ENCODE measurements at regions of chr12 and their contacts with region 1.

Region 1: DNA sequence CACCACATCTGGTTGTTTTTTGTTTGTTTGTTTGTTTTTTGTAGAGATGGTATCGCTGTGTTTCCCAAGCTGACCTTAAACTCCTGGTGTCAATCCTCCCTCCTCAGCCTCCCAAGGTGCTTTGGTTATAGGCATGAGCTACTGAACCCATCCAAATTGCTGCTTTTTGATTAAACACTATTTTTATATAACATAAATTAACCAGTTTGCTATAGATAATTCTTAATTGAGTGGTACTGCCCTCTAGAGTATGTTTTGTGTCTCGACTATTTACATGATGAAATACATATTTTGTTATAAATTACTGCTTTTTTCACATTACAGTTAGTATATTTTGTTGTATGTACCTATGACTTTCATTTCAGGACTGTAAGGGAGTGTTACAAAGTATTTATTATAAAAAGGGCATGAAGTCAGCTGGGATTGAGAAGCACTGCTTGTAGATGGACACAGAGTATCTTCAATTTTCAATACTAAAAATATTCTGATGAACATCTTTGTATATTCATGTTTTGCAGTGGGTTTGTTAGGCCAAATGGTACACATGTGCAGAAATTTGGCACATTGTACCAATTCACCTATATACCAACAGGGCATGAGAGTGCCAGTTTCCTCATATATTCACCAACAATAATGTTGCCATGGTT is 14.9 kb upstream of the SCAF11 start:
- DNase-seq: peak; percentile 8
- H3K4me3 Mint-ChIP-seq: no peak overlapping the region
- H3K27ac Mint-ChIP-seq: no peak overlapping the region
- H3K4me1 Mint-ChIP-seq: no peaks in the 10 kb centered on the region
- H3K27me3 Mint-ChIP-seq: peaks cover 8% of the 10 kb centered on the region
- CTCF ChIP-seq: peak; percentile 31

Region 2: GRCh38 chr12:45170456-45171042 is 834.7 kb before region 1 on chr12:
- CTCF ChIA-PET with region 1: no interaction called
- POLR2A ChIA-PET with region 1: no interaction called
- intact Hi-C with region 1: loop called (anchors 10 kb)
- DNase-seq: peak; percentile 84
- H3K4me3 Mint-ChIP-seq: no peak overlapping the region
- H3K27ac Mint-ChIP-seq: no peak overlapping the region
- H3K4me1 Mint-ChIP-seq: no peaks in the 10 kb centered on the region
- H3K27me3 Mint-ChIP-seq: no peaks in the 10 kb centered on the region
- CTCF ChIP-seq: peak; percentile 85

Region 3: GRCh38 chr12:45872446-45872845 is 132.8 kb before region 1 on chr12:
- CTCF ChIA-PET with region 1: no interaction called
- POLR2A ChIA-PET with region 1: no interaction called
- intact Hi-C with region 1: no loop called
- DNase-seq: no peak
- H3K4me3 Mint-ChIP-seq: no peak overlapping the region
- H3K27ac Mint-ChIP-seq: no peak overlapping the region
- H3K4me1 Mint-ChIP-seq: no peaks in the 10 kb centered on the region
- H3K27me3 Mint-ChIP-seq: no peaks in the 10 kb centered on the region
- CTCF ChIP-seq: no peak

Region 4: GRCh38 chr12:45990468-45991283 is 14.6 kb before region 1 on chr12 and contains the start of gene SCAF11:
- CTCF ChIA-PET with region 1: interaction called, 6 read pairs
- POLR2A ChIA-PET with region 1: interaction called, 15 read pairs
- intact Hi-C with region 1: no loop called
- DNase-seq: peak; percentile 99
- H3K4me3 Mint-ChIP-seq: peak within 1 kb of the TSS; percentile 91
- H3K27ac Mint-ChIP-seq: peak within 1 kb of the TSS; percentile 93
- H3K4me1 Mint-ChIP-seq: peaks cover 31% of the 10 kb centered on the region
- H3K27me3 Mint-ChIP-seq: no peaks in the 10 kb centered on the region
- CTCF ChIP-seq: peak; percentile 85
- total RNA-seq, gene SCAF11: 106 and 107 TPM in 2 replicates

Region 5: DNA sequence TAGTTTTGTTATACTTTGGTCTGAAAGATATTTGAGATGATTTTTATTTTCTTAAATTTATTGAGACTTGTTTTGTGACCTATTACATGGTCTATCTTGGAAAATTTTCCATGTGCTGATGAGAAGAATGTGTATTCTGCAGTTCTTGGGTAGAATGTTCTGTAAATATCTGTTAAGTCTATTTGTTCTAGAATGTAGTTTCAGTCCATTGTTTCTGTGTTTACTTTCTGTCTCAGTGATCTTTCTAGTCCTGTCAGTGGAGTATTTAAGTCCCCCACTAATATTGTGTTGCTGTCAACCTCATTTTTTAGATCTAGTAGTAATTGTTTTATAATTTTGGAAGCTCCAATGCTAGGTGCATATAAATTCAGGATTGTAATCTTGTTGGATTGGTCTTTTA is 15.5 kb after region 1 on chr12:
- CTCF ChIA-PET with region 1: interaction called, 11 read pairs
- POLR2A ChIA-PET with region 1: no interaction called
- intact Hi-C with region 1: no loop called
- DNase-seq: no peak
- H3K4me3 Mint-ChIP-seq: no peak overlapping the region
- H3K27ac Mint-ChIP-seq: no peak overlapping the region
- H3K4me1 Mint-ChIP-seq: no peaks in the 10 kb centered on the region
- H3K27me3 Mint-ChIP-seq: peaks cover 35% of the 10 kb centered on the region
- CTCF ChIP-seq: no peak

Region 6: DNA sequence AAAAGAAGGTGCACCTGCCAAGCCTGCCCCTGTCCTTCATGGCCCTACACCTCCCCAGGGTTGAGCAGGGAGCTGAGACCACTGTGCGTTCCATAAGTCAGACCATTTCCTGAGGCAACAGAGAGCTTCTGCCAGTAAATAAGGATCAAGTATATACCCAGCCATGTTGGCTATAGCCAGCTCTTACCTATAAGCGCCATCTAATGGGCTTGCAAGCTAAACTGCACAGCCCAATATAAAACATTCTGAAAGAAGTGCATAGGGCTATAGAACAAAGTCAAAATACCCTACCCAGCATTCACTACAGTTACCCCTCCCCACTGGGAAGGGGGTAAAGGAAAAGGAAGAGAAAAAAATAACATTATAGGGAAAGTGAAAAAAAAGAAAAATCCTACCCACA is 44.4 kb after region 1 on chr12:
- CTCF ChIA-PET with region 1: no interaction called
- POLR2A ChIA-PET with region 1: no interaction called
- intact Hi-C with region 1: no loop called
- DNase-seq: no peak
- H3K4me3 Mint-ChIP-seq: no peak overlapping the region
- H3K27ac Mint-ChIP-seq: no peak overlapping the region
- H3K4me1 Mint-ChIP-seq: no peaks in the 10 kb centered on the region
- H3K27me3 Mint-ChIP-seq: no peaks in the 10 kb centered on the region
- CTCF ChIP-seq: no peak

Measured in MCF 10A (cell line).